Posterior vena cava (tissue), 2 donors: ENCODE measurements at regions of chr22 and their contacts with region 1.

Region 1: DNA sequence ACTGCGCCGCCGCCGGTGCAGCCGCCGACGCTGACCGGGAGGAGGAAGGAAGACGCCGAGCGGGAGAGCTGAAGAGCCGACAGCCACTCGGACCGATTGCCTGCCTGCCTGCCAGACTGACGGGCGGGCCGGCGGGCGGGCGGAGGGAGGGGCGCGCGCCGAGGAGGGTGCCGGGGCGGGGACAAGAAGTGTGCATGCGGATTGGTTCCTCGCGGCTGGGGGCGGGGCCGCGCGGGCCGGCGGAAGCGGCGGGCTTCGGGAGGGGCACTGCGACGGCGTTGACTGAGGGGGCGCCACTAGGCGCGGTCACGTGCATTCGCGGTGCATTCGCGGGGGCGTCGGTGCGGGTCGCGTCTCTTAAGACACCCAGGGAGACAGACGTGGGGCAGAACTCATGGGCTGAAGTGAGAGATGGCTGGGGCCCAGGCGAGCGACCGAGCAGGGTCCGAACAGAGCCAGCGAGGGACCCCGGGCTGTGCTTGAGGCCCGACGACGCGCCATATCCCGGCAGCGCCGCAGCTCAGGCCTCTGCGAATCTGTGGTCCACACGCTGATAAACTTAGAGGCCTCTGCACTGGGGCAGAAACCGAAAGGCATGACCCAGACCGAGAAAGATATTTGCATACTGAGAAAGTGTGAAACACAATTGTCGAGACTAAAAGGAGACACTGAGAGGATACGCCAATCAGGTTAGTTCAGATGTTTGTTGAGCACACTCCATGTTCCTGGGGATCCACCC is at the start of gene MAPK1:
- DNase-seq: peak; percentile 98
- total RNA-seq, gene MAPK1: 138 to 141 TPM

Region 2: GRCh38 chr22:20833225-20833665 is 1034.5 kb before region 1 on chr22:
- intact Hi-C with region 1: no loop called
- DNase-seq: no peak

Region 3: DNA sequence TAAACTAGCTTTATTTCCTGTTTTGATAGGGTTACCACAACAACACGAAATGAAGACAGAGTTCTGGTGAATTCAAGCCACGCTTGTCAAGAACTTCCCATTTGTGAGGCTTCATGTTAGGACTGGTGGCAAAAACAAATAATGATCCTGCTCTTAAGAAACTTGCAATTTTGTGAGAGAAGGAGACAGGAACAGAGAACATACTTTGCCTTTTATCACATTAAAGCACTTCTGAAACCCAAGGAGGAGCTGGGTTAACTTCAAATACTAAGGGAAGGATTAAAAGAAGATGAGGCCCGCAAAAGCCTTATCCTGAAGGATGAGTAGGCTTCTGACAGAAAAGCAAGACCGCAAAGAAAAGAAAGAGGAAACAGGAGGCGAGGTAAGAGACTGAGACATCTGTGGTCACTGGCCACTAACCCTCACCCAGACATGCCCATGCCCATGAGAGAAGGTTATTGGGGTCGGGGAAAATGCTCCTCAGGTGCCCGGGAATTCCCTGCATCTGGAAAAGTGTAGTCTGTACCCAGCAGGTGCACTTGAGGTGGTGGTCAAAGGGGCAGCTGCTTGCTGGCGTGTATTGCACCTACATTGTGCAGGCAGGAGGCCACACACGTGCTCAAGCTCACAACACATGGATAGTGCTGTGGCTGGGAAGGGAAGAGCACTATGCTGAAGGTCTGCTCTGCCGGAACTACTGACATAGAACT is 50.8 kb before region 1 on chr22:
- intact Hi-C with region 1: loop called in 1 of 2 experiments (anchors 10 kb)
- DNase-seq: no peak